CD4-positive, alpha-beta T cell (primary cell): ENCODE measurements at regions of chr12 and their contacts with region 1.

Region 1: DNA sequence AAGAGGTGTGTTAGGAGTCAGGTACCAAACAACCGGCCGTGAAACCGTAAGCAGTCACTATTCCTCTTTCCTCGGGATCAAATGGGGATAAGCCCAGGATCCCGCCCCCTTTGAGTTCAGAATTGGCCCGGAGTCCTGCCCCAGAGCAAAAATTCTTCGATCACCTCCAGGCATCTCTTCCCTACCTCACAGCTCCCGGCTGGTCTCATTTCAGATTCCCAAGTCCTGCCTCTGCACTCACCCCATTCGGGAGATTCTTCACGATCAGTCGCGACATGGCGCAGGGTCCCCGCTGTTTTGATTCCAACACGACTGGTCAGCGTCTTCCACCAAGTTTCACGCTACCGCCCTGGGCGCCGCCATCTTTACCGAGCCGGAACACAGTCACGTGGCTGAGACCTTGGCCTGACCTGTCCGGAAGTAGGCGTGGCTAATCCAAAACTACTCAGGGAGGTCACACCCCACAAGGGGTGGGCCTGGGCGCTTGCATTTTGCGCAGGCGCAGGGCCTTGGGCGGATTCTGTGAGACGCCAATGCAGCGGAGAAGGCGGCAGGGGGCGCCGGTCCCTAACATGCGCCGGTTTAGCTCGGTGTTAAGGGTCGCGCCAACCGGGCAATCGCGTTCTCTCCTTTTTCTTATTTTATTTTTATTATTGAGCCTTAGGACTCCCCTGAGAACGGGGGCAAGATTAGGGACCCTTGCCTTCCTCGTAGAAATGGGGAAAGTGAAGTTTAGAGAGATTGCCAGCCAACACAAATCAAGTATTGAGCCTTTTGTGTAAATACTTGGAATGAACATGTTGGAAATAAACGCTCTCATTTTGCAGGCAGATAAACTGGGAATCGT is at the start of gene RBM19:
- DNase-seq: peak; percentile 93 to 99 (median 96)
- ATAC-seq: peak; percentile 98
- H3K4me3 ChIP-seq: peak within 1 kb of the TSS; percentile 87
- H3K4me3 Mint-ChIP-seq: peak within 1 kb of the TSS; percentile 100
- H3K27ac ChIP-seq: no peak within 1 kb of the TSS
- H3K27ac Mint-ChIP-seq: peak within 1 kb of the TSS; percentile 90
- H3K4me1 ChIP-seq: peaks cover 21% of the 10 kb centered on the region
- H3K4me1 Mint-ChIP-seq: peaks cover 44% of the 10 kb centered on the region
- H3K27me3 ChIP-seq: no peaks in the 10 kb centered on the region
- H3K27me3 Mint-ChIP-seq: peaks cover 3% of the 10 kb centered on the region
- CTCF ChIP-seq: peak; percentile 95
- total RNA-seq, gene RBM19: 57.1 to 58.5 TPM

Region 2: DNA sequence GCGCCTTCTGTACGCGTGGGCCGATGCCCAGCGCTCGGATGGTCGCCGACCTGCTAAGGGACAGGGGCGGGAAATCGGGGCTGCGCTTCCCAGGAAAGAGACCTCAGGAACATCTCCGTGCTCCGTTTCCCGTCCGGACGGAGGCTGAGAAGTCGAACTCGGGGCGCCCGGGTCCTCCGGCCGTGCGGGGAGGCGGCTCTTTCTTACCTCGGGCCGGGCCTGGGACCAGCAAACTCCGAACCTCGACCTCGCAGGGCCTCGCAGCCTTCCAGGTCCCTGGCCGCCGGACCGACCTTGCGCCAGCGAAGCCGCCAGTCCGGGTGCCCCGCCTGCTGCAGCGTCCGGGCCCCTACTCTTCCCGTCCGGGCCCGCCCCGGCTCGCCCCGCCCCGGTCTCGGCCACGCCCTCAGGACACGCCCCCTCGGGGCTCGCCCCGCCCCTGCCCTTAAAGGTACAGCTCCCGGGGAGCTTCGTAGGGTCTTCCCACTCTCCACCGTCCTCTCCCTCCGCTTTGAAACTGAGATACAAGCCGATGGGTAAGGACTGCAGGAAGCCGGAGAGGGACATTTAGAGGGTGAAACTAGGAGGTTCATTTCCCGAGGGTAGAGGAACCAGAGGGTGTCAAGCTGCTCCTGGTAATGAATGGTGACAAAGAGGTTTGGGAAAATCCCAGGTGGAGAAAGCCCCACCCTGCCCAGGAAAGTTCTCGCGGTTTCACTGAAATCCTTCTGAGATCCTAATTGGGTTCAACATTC is 631.2 kb before region 1 on chr12 and contains the start of gene SLC8B1:
- CTCF ChIA-PET with region 1: no interaction called
- POLR2A ChIA-PET with region 1: no interaction called
- intact Hi-C with region 1: loop called in 1 of 2 experiments (anchors 10 kb)
- DNase-seq: peak; percentile 69 to 95 (median 86)
- ATAC-seq: peak; percentile 97
- H3K4me3 ChIP-seq: peak within 1 kb of the TSS; percentile 94
- H3K4me3 Mint-ChIP-seq: peak within 1 kb of the TSS; percentile 99
- H3K27ac ChIP-seq: peak within 1 kb of the TSS in 1 of 2 donors; percentile 25
- H3K27ac Mint-ChIP-seq: peak within 1 kb of the TSS; percentile 87
- H3K4me1 ChIP-seq: peaks cover 33% of the 10 kb centered on the region
- H3K4me1 Mint-ChIP-seq: peaks cover 45% of the 10 kb centered on the region
- H3K27me3 ChIP-seq: no peaks in the 10 kb centered on the region
- H3K27me3 Mint-ChIP-seq: no peaks in the 10 kb centered on the region
- CTCF ChIP-seq: no peak
- total RNA-seq, gene SLC8B1: 85.3 to 92.7 TPM

Region 3: DNA sequence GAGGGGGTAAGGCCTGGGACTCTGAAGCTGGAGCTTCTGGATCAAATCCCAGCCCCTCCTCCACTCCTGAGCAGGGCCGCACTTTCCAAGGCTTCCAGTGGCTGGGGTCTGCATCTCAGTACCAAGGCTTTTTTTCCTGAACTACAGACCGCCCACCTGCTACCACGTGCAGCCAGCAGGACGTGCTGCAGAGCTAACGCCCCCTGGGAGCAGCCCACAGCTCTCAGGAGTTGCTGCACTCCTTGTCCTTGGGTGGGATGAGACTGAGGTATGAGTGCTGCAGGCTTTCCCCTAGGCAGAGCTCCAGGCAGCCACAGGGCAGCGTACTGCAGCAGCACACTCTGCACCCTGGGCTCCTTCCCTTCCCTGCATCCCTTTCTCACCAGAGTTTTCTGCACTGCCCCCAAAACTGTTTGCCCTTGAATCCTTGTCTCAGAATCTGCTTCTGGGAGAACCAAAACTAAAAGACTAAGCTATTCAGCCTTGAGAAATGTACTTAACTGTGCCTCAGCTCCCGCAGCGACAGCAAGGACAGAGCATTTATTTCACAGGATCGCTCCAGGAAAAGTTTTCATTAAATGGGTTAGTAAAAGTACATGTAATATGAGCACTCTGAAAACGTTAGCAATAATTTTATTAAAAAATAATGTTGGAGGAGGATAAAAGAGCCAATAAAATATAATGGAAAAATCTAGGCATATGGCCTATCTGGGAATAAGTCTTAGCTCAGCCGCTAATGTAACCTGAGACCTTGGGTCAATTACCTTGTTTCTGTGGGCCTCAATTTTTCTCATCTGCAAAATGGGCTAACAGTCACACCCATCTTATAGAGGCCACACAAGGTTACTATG is 25.6 kb before region 1 on chr12:
- CTCF ChIA-PET with region 1: interaction called, 11 read pairs
- POLR2A ChIA-PET with region 1: no interaction called
- intact Hi-C with region 1: no loop called
- DNase-seq: no peak
- ATAC-seq: no peak
- H3K4me3 ChIP-seq: no peak overlapping the region
- H3K4me3 Mint-ChIP-seq: no peak overlapping the region
- H3K27ac ChIP-seq: no peak overlapping the region
- H3K27ac Mint-ChIP-seq: no peak overlapping the region
- H3K4me1 ChIP-seq: no peaks in the 10 kb centered on the region
- H3K4me1 Mint-ChIP-seq: no peaks in the 10 kb centered on the region
- H3K27me3 ChIP-seq: no peaks in the 10 kb centered on the region
- H3K27me3 Mint-ChIP-seq: no peaks in the 10 kb centered on the region
- CTCF ChIP-seq: no peak

Region 4: GRCh38 chr12:114508529-114509129 is 542.5 kb after region 1 on chr12:
- CTCF ChIA-PET with region 1: interaction called, 11 read pairs
- POLR2A ChIA-PET with region 1: no interaction called
- intact Hi-C with region 1: loop called in 1 of 2 experiments (anchors 1 kb)
- DNase-seq: peak; percentile 11 to 71 (median 41)
- ATAC-seq: peak; percentile 58
- H3K4me3 ChIP-seq: no peak overlapping the region
- H3K4me3 Mint-ChIP-seq: no peak overlapping the region
- H3K27ac ChIP-seq: no peak overlapping the region
- H3K27ac Mint-ChIP-seq: no peak overlapping the region
- H3K4me1 ChIP-seq: no peaks in the 10 kb centered on the region
- H3K4me1 Mint-ChIP-seq: no peaks in the 10 kb centered on the region
- H3K27me3 ChIP-seq: peaks cover 0 to under 1% of the 10 kb centered on the region in 2 experiments
- H3K27me3 Mint-ChIP-seq: peaks cover 25% of the 10 kb centered on the region
- CTCF ChIP-seq: peak; percentile 78

Region 5: GRCh38 chr12:115916910-115917668 is 1950.9 kb after region 1 on chr12:
- CTCF ChIA-PET with region 1: interaction called, 4 read pairs
- POLR2A ChIA-PET with region 1: no interaction called
- intact Hi-C with region 1: loop called in 1 of 2 experiments (anchors 5 kb)
- DNase-seq: peak; percentile 56 to 84 (median 68)
- ATAC-seq: peak; percentile 91
- H3K4me3 ChIP-seq: no peak overlapping the region
- H3K4me3 Mint-ChIP-seq: peak overlapping the region; percentile 54
- H3K27ac ChIP-seq: no peak overlapping the region
- H3K27ac Mint-ChIP-seq: no peak overlapping the region
- H3K4me1 ChIP-seq: peaks cover 5% of the 10 kb centered on the region
- H3K4me1 Mint-ChIP-seq: no peaks in the 10 kb centered on the region
- H3K27me3 ChIP-seq: peaks cover 13 to 46% of the 10 kb centered on the region in 2 experiments
- H3K27me3 Mint-ChIP-seq: peaks cover 91% of the 10 kb centered on the region
- CTCF ChIP-seq: peak; percentile 97